ENCODE measurements at regions of chr11 and their contacts with region 1.

Region 1: GRCh38 chr11:96342961-96343711 is at the start of gene MAML2:
- DNase-seq: peak; percentile 89
- H3K4me3 ChIP-seq: peak within 1 kb of the TSS; percentile 78
- H3K27ac ChIP-seq: peak within 1 kb of the TSS; percentile 70
- H3K4me1 ChIP-seq: peaks cover 35% of the 10 kb centered on the region
- H3K27me3 ChIP-seq: no peaks in the 10 kb centered on the region
- CTCF ChIP-seq: peak; percentile 83
- total RNA-seq, gene MAML2: 17.7 and 28.3 TPM in 2 replicates

Region 2: GRCh38 chr11:95835768-95836488 is 507.2 kb before region 1 on chr11:
- CTCF ChIA-PET with region 1: interaction called, 10 read pairs
- POLR2A ChIA-PET with region 1: interaction called, 4 read pairs
- intact Hi-C with region 1: loop called (anchors 1 kb)
- DNase-seq: peak; percentile 76 to 89
- H3K4me3 ChIP-seq: no peak overlapping the region
- H3K27ac ChIP-seq: peak overlapping the region; percentile 38
- H3K4me1 ChIP-seq: no peaks in the 10 kb centered on the region
- H3K27me3 ChIP-seq: no peaks in the 10 kb centered on the region
- CTCF ChIP-seq: peak; percentile 97

Region 3: GRCh38 chr11:95908826-95909225 is 434.3 kb before region 1 on chr11:
- CTCF ChIA-PET with region 1: no interaction called
- POLR2A ChIA-PET with region 1: no interaction called
- intact Hi-C with region 1: no loop called
- DNase-seq: no peak
- H3K4me3 ChIP-seq: no peak overlapping the region
- H3K27ac ChIP-seq: 0 out of 2 replicates have a peak overlapping the region, but pooled peaks have one; percentile 5
- H3K4me1 ChIP-seq: peaks cover 22% of the 10 kb centered on the region; the same call in 1 of the 2 replicates
- H3K27me3 ChIP-seq: no peaks in the 10 kb centered on the region
- CTCF ChIP-seq: no peak

Region 4: GRCh38 chr11:95991545-95991944 is 351.6 kb before region 1 on chr11:
- CTCF ChIA-PET with region 1: no interaction called
- POLR2A ChIA-PET with region 1: no interaction called
- intact Hi-C with region 1: loop called (anchors 5 kb)
- DNase-seq: peak in 1 of 2 experiments; percentile 56
- H3K4me3 ChIP-seq: no peak overlapping the region
- H3K27ac ChIP-seq: peak overlapping the region; percentile 75
- H3K4me1 ChIP-seq: peaks cover 30% of the 10 kb centered on the region
- H3K27me3 ChIP-seq: no peaks in the 10 kb centered on the region
- CTCF ChIP-seq: no peak

Region 5: DNA sequence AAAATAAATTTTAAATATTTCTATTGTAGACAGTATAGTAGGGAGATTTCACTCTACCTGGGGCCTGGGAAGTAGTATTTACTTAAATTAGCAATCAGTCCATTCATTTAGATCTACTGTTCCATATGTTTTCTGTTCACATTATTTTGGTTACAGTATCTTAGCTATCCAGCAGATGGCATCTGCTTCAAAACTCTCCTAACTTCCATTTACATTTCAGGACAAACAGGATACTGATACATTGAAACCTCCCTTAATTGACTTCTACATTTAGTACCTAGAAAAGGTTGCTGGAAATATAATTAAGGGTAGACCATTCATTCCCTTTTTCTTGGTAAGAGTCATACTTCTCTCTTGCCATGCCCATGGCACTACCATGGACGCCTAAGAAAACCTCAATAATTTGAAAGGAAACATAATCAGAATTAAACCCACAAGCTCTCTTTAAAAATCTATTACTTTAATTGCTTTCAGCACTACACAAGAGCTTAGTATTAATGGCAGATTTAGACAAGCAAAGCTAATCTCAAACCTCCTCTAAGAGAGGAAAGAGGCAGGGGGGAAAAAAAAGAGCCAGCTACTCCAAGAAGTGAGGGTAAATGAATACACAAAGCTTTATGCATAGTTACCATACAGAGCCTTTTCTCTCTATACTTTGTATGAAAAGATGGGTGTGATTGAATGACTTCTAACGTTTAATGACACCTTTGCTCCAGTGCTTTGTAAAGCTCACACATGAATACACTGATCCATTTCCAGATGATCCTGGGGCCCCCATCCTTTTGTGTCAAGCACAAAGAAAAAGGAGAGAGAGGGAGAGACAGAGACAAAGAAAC is 288.0 kb before region 1 on chr11:
- CTCF ChIA-PET with region 1: interaction called, 5 read pairs
- POLR2A ChIA-PET with region 1: no interaction called
- intact Hi-C with region 1: loop called (anchors 5 kb)
- DNase-seq: peak in 1 of 2 experiments; percentile 50
- H3K4me3 ChIP-seq: no peak overlapping the region
- H3K27ac ChIP-seq: peak overlapping the region; percentile 47
- H3K4me1 ChIP-seq: peaks cover 64% of the 10 kb centered on the region
- H3K27me3 ChIP-seq: no peaks in the 10 kb centered on the region
- CTCF ChIP-seq: peak; percentile 79

Region 6: DNA sequence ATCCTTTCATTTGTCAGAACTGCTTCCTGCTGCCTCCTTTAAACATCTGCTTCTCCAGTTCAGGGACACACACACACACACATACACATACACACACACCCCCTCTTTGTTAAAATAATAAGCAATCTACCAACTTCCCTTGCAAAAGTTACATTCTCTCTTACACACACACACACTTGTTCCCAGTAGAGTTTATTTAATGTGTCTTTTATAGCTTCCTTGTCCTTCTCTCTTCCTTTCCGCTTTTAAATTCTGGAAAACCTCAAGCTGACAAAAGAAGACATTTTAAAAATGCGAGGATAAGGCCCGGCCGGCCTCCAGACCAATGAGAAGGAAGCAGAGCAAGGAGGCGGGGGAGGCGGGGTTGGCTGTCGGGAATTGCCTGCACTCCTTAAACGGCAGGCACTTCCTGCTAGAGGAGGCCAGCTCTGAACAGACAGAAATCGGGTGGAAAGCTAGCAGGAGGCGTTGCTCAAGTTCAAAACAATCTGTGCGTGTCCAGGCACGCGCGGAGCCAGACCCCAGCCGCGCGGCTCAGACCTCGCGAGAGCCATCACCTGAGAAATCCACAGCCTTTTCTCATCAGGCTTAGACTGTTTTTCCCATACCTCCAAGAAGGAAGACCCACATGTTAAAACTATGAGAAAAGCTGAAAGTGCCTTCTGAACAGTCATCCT is 100.0 kb before region 1 on chr11:
- CTCF ChIA-PET with region 1: interaction called, 12 read pairs
- POLR2A ChIA-PET with region 1: interaction called, 9 read pairs
- intact Hi-C with region 1: loop called (anchors 1 kb)
- DNase-seq: peak; percentile 91 to 97
- H3K4me3 ChIP-seq: peak overlapping the region; percentile 55
- H3K27ac ChIP-seq: peak overlapping the region; percentile 94
- H3K4me1 ChIP-seq: peaks cover 61% of the 10 kb centered on the region
- H3K27me3 ChIP-seq: no peaks in the 10 kb centered on the region
- CTCF ChIP-seq: no peak

Region 7: DNA sequence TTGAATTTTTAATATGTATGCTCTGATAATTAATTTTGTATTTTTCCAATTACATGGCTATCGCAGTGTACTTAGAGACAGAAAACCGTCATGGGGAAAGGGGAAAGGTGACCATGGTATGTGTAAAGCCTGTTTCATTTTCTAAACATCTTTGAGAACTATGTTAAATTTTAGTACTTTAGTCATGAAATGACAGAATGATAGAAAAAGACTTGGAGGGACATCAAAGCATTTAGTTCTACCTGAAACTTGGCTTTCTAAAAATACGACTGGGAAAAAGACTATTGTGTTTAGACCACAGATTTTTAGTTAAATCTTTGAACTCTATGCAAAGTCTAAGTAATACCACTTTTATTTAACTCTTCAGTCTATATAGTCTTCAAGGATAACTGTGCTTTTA is 54.2 kb before region 1 on chr11:
- CTCF ChIA-PET with region 1: no interaction called
- POLR2A ChIA-PET with region 1: interaction called, 26 read pairs
- intact Hi-C with region 1: no loop called
- DNase-seq: no peak
- H3K4me3 ChIP-seq: no peak overlapping the region
- H3K27ac ChIP-seq: no peak overlapping the region
- H3K4me1 ChIP-seq: no peaks in the 10 kb centered on the region
- H3K27me3 ChIP-seq: no peaks in the 10 kb centered on the region
- CTCF ChIP-seq: no peak

Region 8: GRCh38 chr11:96324960-96325359 is 18.2 kb before region 1 on chr11:
- CTCF ChIA-PET with region 1: interaction called, 5 read pairs
- POLR2A ChIA-PET with region 1: no interaction called
- intact Hi-C with region 1: loop called (anchors 1 kb)
- DNase-seq: peak; percentile 49 to 97
- H3K4me3 ChIP-seq: peak overlapping the region; percentile 23; the same call in 1 of the 2 replicates
- H3K27ac ChIP-seq: peak overlapping the region; percentile 86
- H3K4me1 ChIP-seq: peaks cover 56% of the 10 kb centered on the region
- H3K27me3 ChIP-seq: no peaks in the 10 kb centered on the region
- CTCF ChIP-seq: no peak

Measured in PC-9 (cell line).